Psoas muscle (tissue), 8 donors: ENCODE measurements at regions of chr14 and their contacts with region 1.

Region 1: DNA sequence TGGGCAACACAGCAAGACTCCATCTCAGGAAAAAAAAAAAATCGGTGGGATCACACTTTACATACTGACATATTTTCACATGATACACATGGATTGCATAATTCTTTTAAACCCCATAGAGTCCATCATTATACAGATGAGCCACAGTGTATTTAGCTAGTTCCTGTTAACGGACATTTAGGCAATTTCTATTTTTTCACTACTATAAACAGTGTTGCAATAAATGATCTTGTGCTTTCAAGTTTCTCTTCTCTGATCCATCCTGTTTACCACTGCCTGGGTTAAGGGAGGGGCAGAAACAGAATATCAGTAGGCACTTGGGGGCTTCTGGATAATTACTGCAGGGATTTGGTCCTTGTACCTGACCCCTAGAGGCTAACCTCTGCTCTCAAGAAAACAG is 43.4 kb upstream of the SPTLC2 start:
- DNase-seq: no peak
- ATAC-seq: no peak
- H3K4me3 ChIP-seq: no peak overlapping the region
- H3K27ac ChIP-seq: no peak overlapping the region
- H3K4me1 ChIP-seq: no peaks in the 10 kb centered on the region
- H3K27me3 ChIP-seq: no peaks in the 10 kb centered on the region
- CTCF ChIP-seq: no peak

Region 2: GRCh38 chr14:77478796-77479195 is 181.0 kb before region 1 on chr14:
- intact Hi-C with region 1: no loop called
- DNase-seq: no peak
- ATAC-seq: no peak
- H3K4me3 ChIP-seq: no peak overlapping the region
- H3K27ac ChIP-seq: no peak overlapping the region
- H3K4me1 ChIP-seq: no peaks in the 10 kb centered on the region
- H3K27me3 ChIP-seq: no peaks in the 10 kb centered on the region
- CTCF ChIP-seq: no peak

Region 3: GRCh38 chr14:77607741-77608302 is 52.0 kb before region 1 on chr14:
- intact Hi-C with region 1: no loop called
- DNase-seq: no peak
- ATAC-seq: no peak
- H3K4me3 ChIP-seq: no peak overlapping the region
- H3K27ac ChIP-seq: no peak overlapping the region
- H3K4me1 ChIP-seq: no peaks in the 10 kb centered on the region
- H3K27me3 ChIP-seq: no peaks in the 10 kb centered on the region
- CTCF ChIP-seq: no peak

Region 4: DNA sequence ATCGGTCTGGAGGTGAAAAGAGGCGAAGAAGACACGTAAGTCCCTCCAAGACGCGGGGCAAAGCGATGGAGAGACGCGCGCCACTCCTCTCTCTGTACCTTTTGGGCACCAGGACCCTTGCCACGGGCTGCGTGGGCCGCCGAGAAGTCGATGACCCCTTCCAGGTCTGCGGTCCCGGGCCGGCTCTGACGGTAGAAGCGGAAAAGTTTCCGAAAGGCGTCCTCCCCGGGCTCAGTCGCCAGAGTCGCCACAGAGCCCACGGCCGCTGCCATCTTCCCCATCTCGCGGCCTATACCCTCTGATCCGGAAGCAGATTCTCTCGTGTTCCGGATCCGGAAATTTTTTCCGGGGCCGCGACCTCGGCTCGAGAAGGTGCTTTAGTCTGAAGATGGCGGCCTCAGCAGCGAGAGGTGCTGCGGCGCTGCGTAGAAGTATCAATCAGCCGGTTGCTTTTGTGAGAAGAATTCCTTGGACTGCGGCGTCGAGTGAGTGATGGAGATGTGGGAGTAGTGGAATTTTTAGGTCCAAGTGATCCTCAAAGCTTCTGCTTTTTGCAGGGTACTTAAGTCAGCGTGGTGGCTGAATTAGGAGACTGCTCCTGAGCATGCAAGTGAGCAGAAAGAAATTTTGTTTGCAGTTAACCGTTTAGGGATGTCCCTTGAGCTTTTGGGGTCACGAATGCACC is 48.0 kb after region 1 on chr14 and contains the starts of genes ALKBH1 and SLIRP:
- intact Hi-C with region 1: loop called in 1 of 2 experiments (anchors 5 kb)
- DNase-seq: peak; percentile 86 to 91
- ATAC-seq: peak; percentile 97 to 99 (median 98)
- H3K4me3 ChIP-seq: peak within 1 kb of the TSS; percentile 98
- H3K27ac ChIP-seq: peak within 1 kb of the TSS; percentile 74
- H3K4me1 ChIP-seq: peaks cover 25% of the 10 kb centered on the region
- H3K27me3 ChIP-seq: no peaks in the 10 kb centered on the region
- CTCF ChIP-seq: no peak
- total RNA-seq, gene ALKBH1: 7.7 to 14.9 (median 10.4) TPM
- total RNA-seq, gene SLIRP: 129 to 185 (median 143) TPM